Right cardiac atrium (tissue), 5 donors: ENCODE measurements at regions of chr10 and their contacts with region 1.

Region 1: GRCh38 chr10:84205049-84205852 is 10.9 kb downstream of the CDHR1 start:
- DNase-seq: peak; percentile 44 to 83 (median 75)
- ATAC-seq: peak; percentile 52 to 55
- H3K4me3 ChIP-seq: no peak overlapping the region
- H3K27ac ChIP-seq: no peak overlapping the region
- H3K4me1 ChIP-seq: no peaks in the 10 kb centered on the region
- H3K27me3 ChIP-seq: no peaks in the 10 kb centered on the region

Region 2: GRCh38 chr10:84139126-84140035 is 65.9 kb before region 1 on chr10 and contains the start of gene GHITM:
- intact Hi-C with region 1: loop called in 1 of 4 experiments (anchors 10 kb)
- DNase-seq: peak; percentile 98 to 99 (median 99)
- ATAC-seq: peak; percentile 99
- H3K4me3 ChIP-seq: peak within 1 kb of the TSS; percentile 69
- H3K27ac ChIP-seq: peak within 1 kb of the TSS; percentile 46
- H3K4me1 ChIP-seq: no peaks in the 10 kb centered on the region
- H3K27me3 ChIP-seq: no peaks in the 10 kb centered on the region
- total RNA-seq, gene GHITM: 274 to 310 (median 296) TPM

Region 3: GRCh38 chr10:84147347-84147746 is 57.9 kb before region 1 on chr10:
- intact Hi-C with region 1: loop called in 2 of 4 experiments (anchors 5 to 10 kb)
- DNase-seq: no peak
- ATAC-seq: no peak
- H3K4me3 ChIP-seq: no peak overlapping the region
- H3K27ac ChIP-seq: no peak overlapping the region
- H3K4me1 ChIP-seq: no peaks in the 10 kb centered on the region
- H3K27me3 ChIP-seq: no peaks in the 10 kb centered on the region

Region 4: DNA sequence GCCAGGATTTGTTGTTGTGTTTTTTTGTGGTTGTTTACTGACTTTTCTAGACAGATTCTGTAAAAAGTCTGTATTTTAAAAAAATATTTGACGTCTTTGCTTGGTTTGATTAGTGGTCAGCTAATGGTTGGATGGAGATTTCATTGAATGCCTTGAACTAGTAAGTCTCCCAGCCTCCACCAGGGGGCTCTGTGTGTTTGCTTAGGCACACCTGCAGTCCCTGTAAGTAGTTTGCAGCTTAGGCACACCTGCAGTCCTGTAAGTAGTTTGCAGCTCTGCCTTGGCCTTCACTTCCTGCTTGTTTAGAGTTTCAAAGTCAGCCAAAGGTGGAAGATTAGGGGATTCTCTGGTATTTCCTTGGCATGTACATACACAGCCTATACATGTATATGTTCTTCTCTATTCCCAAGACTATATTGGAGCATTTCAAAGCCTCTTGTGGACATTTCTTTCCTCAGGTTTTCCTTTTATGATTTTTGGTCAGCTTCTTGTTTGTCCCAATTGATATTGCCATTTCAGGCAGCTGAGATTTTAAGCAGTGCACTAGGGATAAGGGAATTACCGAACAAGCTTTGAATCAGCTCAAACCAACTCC is 224.8 kb after region 1 on chr10:
- intact Hi-C with region 1: no loop called
- DNase-seq: peak; percentile 25 to 77 (median 55)
- ATAC-seq: peak in 1 of 2 donors; percentile 58
- H3K4me3 ChIP-seq: no peak overlapping the region
- H3K27ac ChIP-seq: no peak overlapping the region
- H3K4me1 ChIP-seq: peaks cover 6% of the 10 kb centered on the region
- H3K27me3 ChIP-seq: no peaks in the 10 kb centered on the region